ENCODE measurements at regions of chr3 and their contacts with region 1.

Region 1: DNA sequence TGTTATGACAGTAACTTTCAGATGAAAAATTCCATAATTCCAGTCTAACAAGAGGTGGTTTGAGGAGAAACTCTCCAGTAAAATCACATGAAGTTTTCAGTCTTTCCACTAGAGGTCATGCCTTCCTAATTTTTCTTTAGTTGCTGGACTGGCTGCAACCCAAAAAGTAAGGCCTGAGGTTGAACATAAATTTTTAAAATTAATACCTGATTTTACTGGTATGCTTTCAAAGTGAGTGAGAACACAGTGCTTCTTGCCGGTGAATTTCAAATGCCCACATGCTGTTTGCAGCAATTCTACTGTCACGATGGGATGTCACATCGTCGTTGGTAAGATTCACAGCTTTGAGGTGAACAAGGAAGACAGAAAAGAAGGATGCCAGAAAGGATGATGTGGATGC is 89.0 kb upstream of the FGF12 start:
- DNase-seq: no peak
- ATAC-seq: no peak

Region 2: DNA sequence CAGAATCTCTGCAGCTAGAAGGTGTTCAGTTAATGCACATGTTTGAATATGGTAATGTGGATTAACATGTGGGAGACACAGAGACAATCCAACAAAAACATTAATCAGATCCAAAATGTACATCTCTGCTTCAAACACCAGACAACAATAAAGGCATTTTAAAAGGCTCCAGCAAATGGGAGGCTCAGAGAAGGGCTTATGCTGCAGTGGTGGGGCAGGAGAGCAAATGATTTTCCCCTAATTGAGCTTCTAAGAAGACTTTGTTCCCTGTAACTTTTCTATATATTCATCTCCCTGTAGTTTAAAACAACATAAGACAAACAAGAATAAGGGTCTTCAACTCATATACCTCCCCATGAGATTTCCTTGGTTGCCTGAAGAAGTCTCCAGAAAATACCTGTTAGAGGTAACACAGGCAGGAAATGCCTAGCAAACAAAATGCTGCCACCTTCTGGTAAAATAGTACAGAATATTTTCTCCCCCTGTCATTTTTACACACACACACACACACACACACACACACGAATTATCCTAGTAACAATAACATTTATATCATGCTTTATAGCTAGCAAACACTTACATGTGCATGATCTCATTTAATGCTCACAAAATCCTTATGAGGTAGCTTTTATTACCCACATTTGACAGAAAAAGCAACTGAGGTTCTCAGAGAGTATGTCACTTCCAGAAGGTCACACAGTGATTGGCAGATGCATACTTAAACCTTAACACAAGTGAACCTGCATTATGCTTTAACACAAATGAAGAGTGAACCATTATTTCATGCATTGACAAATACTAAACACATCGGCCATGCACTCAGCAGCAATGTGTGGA is 224.7 kb after region 1 on chr3:
- intact Hi-C with region 1: loop called (anchors 2 to 5 kb)
- DNase-seq: no peak
- ATAC-seq: peak in 1 of 2 donors; percentile 49

Region 3: DNA sequence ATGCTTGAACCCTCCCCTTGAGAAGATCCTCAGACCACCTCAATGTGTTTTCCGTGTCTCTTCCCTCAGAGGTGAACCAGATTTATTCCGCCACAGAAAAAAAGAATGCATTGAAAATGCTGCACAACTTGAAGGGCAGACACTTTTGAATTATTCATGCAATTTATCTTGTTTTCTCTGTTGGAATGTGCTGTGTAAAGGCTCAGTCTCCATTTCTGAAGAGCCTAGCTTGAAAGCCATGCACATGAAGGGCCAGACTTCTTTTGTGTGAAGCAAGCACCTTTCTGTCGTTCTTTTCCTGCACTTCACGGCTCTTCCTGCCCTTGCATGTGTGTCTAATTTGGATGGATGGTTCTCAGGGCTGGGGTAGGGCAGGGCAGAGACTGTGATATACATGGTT is 641.2 kb after region 1 on chr3:
- intact Hi-C with region 1: loop called in 1 of 2 experiments (anchors 5 kb)
- DNase-seq: no peak
- ATAC-seq: no peak

Region 4: DNA sequence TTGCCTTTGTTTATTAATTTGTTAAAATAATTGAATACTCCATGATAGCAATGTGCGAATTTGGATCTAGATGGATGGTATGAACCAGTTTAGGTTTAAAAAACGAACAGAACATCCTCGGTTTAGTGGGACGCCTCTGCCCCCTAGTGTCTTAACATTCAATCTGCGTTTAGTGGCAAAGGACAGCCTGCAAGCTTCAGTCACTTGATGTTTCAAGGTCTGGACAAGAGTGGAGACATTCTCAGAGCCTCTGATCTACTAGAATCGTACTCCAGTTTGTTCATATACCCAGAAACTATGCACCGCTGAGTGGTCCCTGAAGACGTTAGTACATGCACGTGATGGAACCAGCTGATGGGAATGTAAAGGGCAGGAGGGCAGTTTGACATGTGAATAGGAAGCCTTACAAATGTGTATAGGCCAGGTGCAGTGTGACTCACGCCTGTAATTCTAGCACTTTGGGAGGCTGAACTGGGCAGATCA is 756.1 kb after region 1 on chr3:
- intact Hi-C with region 1: loop called (anchors 2 to 5 kb)
- DNase-seq: peak; percentile 30
- ATAC-seq: peak; percentile 71 to 80

Measured in left cardiac atrium (tissue), 4 donors.